Calu3 (cell line): ENCODE measurements at regions of chr5 and their contacts with region 1.

Region 1: GRCh38 chr5:92969781-92970237 is 611.2 kb downstream of the NR2F1-AS1 start:
- DNase-seq: peak; percentile 61
- H3K4me3 Mint-ChIP-seq: peak overlapping the region; percentile 54
- H3K27ac Mint-ChIP-seq: peak overlapping the region; percentile 59
- H3K4me1 Mint-ChIP-seq: peaks cover 40% of the 10 kb centered on the region
- H3K27me3 Mint-ChIP-seq: no peaks in the 10 kb centered on the region
- CTCF ChIP-seq: no peak

Region 2: DNA sequence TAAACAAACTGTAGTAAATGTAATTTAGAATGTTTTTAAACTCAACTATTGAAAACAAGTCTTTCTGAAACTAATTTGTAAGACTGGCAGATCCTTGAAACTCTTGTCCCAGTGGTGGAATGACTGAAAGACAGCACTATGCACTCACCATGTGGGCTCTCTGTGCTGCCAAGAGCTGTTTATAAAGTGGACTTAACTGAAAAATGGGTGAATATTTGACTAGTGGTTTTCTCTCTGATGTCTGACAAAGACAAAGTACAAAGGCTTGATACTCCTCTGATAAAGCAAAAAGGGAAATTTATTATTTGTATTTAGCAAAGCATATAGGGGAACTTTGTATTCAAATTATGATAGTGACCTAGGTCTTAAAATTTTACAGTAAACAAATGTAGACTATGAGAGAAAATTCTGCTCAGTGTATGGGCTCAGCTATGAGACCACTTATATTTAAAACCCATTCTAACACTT is 24.1 kb before region 1 on chr5:
- CTCF ChIA-PET with region 1: interaction called, 12 read pairs
- intact Hi-C with region 1: loop called (anchors 1 kb)
- DNase-seq: peak; percentile 44
- H3K4me3 Mint-ChIP-seq: peak overlapping the region; percentile 51
- H3K27ac Mint-ChIP-seq: peak overlapping the region; percentile 92
- H3K4me1 Mint-ChIP-seq: peaks cover 77% of the 10 kb centered on the region
- H3K27me3 Mint-ChIP-seq: no peaks in the 10 kb centered on the region
- CTCF ChIP-seq: no peak

Region 3: DNA sequence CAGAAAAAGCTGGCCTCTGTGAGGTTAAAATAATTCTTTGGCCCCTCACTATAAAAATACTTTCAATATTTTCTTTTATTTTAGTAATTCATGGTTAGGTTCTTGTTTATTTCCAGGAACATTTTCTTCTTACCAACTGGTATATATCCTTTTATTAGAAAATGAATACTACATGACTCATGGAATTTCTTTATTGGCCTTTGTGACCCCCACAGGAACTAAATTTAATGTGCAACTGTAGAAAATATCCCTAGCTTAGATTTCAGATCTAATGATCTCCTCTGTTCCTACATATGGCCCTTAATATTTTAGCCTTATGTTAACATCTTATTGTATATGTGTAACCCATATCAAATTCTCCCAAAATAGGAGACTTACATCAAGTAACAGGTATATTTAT is 181.3 kb after region 1 on chr5:
- CTCF ChIA-PET with region 1: interaction called, 3 read pairs
- intact Hi-C with region 1: loop called (anchors 5 kb)
- DNase-seq: no peak
- H3K4me3 Mint-ChIP-seq: no peak overlapping the region
- H3K27ac Mint-ChIP-seq: no peak overlapping the region
- H3K4me1 Mint-ChIP-seq: peaks cover 25% of the 10 kb centered on the region
- H3K27me3 Mint-ChIP-seq: no peaks in the 10 kb centered on the region
- CTCF ChIP-seq: no peak

Region 4: DNA sequence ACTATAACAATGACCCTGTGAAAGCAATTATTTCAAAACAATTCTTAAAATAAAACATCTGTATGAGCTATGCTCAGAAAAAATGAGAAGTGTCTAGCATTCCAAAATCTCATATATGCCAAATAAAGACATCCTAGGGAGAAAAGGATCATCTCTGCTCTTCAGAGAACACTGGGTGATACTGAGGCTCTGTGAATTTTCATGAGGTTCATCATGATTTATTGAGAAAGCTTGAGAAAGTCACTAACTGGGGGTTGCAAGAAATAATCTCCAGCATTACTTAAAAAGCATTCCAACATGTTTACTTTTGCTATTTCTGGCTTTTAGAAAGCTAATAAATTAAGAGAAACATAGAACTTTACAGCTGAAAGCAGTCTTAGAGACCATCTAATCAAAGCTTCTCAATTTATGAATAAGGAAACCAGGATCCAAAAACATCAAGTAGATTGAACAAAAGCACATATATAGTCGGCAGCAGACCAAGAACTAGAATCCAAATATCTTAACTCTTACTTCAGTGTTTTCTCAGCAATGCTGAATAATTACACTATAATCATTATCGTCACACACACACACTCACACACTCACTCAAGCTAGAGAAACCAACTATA is 238.4 kb after region 1 on chr5:
- CTCF ChIA-PET with region 1: no interaction called
- intact Hi-C with region 1: no loop called
- DNase-seq: no peak
- H3K4me3 Mint-ChIP-seq: no peak overlapping the region
- H3K27ac Mint-ChIP-seq: no peak overlapping the region
- H3K4me1 Mint-ChIP-seq: no peaks in the 10 kb centered on the region
- H3K27me3 Mint-ChIP-seq: no peaks in the 10 kb centered on the region
- CTCF ChIP-seq: no peak